PC-9 (cell line): ENCODE measurements at regions of chr2 and their contacts with region 1.

Region 1: GRCh38 chr2:46722142-46722541 is 193.5 kb downstream of the MCFD2 start:
- DNase-seq: no peak
- H3K4me3 ChIP-seq: no peak overlapping the region
- H3K27ac ChIP-seq: no peak overlapping the region
- H3K4me1 ChIP-seq: peaks cover 16% of the 10 kb centered on the region; the same call in 1 of the 2 replicates
- H3K27me3 ChIP-seq: no peaks in the 10 kb centered on the region
- CTCF ChIP-seq: no peak

Region 2: GRCh38 chr2:46707909-46708308 is 14.2 kb before region 1 on chr2:
- CTCF ChIA-PET with region 1: interaction called, 10 read pairs
- POLR2A ChIA-PET with region 1: interaction called, 4 read pairs
- intact Hi-C with region 1: no loop called
- DNase-seq: no peak
- H3K4me3 ChIP-seq: no peak overlapping the region
- H3K27ac ChIP-seq: no peak overlapping the region
- H3K4me1 ChIP-seq: no peaks in the 10 kb centered on the region
- H3K27me3 ChIP-seq: no peaks in the 10 kb centered on the region
- CTCF ChIP-seq: no peak